ENCODE measurements at regions of chr1 and their contacts with region 1.

Region 1: DNA sequence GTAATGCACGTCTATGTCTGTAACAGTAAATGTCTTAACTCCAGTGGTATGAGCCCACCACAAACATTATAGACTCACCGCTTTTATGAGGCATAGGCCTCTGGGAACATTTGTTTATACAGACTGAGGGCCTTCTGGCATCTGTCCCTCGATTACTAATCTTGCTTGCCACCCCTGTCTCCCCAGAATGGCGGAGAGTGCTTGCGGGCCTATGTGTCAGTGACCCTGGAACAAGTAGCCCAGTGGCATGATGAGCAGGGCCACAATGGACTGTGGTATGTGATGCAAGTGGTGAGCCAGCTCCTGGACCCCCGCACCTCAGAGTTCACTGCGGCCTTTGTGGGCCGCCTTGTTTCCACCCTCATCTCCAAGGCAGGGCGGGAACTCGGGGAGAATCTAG is 18.3 kb upstream of the SHISA4 start:
- DNase-seq: no peak
- H3K4me3 ChIP-seq: no peak overlapping the region
- H3K27ac ChIP-seq: no peak overlapping the region
- H3K4me1 ChIP-seq: no peaks in the 10 kb centered on the region
- H3K27me3 ChIP-seq: no peaks in the 10 kb centered on the region
- CTCF ChIP-seq: no peak

Region 2: DNA sequence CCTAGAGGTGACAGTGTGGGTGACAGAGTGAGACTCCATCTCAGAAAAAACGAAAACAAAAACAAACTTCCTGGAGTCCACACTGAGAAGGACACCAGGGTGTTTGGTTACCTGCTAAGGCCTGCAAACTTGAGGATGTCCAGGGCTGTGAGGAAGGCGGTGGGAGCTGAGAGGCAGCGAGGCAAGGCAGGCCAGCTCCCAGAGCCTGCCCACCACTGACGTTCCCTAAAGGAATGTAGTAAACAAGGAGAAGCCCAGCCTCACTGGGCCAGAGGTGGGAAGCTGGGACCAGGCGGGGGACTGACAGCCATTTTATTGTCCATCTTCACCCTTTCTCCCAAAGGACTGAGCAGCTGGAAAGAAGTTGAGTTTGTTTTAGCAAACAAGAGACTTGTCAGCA is 42.4 kb after region 1 on chr1:
- CTCF ChIA-PET with region 1: no interaction called
- dilution Hi-C with region 1: loop called (anchors 5 kb)
- in situ Hi-C with region 1: no loop called
- intact Hi-C with region 1: no loop called
- DNase-seq: no peak
- H3K4me3 ChIP-seq: no peak overlapping the region
- H3K27ac ChIP-seq: no peak overlapping the region
- H3K4me1 ChIP-seq: peaks cover 14% of the 10 kb centered on the region
- H3K27me3 ChIP-seq: no peaks in the 10 kb centered on the region
- CTCF ChIP-seq: no peak